ENCODE measurements at regions of chr10 and their contacts with region 1.

Region 1: GRCh38 chr10:627032-627992 is 62.2 kb downstream of the DIP2C start:
- DNase-seq: no peak
- H3K4me3 ChIP-seq: no peak overlapping the region
- H3K27ac ChIP-seq: no peak overlapping the region
- H3K4me1 ChIP-seq: peaks cover 42% of the 10 kb centered on the region
- H3K27me3 ChIP-seq: no peaks in the 10 kb centered on the region
- CTCF ChIP-seq: no peak
- POLR2A ChIP-seq: no peak

Region 2: DNA sequence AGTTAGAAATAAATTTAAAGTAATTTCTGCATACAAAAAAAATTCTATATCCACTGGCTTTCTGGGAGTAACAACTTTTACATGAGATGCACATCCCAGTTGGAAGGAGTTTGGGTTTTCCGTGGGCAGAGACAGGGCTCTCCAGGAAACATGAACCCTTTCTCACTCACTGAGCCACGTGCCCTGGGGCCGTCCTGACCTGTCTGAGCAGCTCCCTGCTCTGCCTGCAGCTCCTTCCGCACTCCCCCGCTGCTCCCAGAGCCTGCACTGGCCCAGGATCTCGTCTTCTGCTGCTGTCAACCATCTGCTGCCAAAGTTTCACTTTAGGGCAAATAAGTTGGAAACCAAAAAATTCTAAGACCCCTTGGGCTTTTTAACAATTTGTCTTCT is 106.9 kb before region 1 on chr10:
- intact Hi-C with region 1: no loop called
- DNase-seq: no peak
- H3K4me3 ChIP-seq: no peak overlapping the region
- H3K27ac ChIP-seq: no peak overlapping the region
- H3K4me1 ChIP-seq: peaks cover 29% of the 10 kb centered on the region
- H3K27me3 ChIP-seq: no peaks in the 10 kb centered on the region
- CTCF ChIP-seq: no peak
- POLR2A ChIP-seq: no peak

Region 3: DNA sequence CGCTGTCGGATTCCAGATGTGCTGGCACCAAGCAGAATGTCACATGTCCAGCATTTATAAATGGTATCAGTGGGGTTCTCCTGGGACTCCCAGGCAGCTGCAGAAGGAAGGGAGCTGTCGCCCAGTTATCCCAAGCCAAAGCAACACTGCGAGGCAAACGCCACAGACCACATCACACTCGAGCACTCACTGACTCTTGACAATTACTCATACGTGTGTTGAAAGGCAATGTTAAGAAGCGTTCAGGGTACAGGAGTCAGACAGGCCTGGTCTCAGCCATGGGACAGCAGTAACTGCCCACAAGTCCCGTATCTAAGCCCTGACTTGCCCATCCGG is 51.2 kb before region 1 on chr10:
- intact Hi-C with region 1: no loop called
- DNase-seq: no peak
- H3K4me3 ChIP-seq: no peak overlapping the region
- H3K27ac ChIP-seq: no peak overlapping the region
- H3K4me1 ChIP-seq: peaks cover 35% of the 10 kb centered on the region
- H3K27me3 ChIP-seq: no peaks in the 10 kb centered on the region
- CTCF ChIP-seq: no peak
- POLR2A ChIP-seq: no peak

Region 4: DNA sequence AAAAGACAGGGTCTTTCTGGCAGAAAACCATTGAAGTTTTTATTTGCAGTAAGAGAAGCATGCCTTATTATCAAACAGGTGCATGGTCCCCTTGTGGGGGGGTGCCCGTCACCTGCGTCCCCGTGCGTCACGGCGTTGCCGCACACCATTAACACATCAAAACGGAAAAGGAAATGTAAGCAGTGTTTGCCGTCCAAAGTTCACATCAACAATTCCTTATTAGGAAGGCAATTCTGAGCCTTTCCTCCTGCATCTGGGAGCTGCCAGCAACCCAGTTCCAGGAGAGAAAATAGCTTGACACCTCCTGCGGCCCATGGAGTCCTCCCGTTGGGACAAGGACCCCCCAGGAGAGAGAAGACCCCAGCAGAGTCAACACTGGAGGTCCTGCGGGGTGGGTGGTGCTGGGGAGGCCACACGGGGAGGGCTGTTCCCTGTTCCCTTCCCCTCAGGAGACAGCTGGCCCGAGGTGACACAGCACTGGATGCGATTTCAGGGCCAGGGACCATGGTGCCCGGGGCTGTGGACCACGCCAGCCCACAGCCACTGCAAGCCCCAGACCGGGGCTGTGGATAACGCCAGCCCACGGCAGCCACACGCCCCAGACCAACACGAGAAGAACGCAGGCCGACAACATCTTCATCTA is 22.6 kb after region 1 on chr10:
- intact Hi-C with region 1: loop called (anchors 1 kb)
- DNase-seq: no peak
- H3K4me3 ChIP-seq: peak overlapping the region in 1 of 2 donors; percentile 30
- H3K27ac ChIP-seq: peak overlapping the region; percentile 20
- H3K4me1 ChIP-seq: peaks cover 36% of the 10 kb centered on the region
- H3K27me3 ChIP-seq: no peaks in the 10 kb centered on the region
- CTCF ChIP-seq: no peak
- POLR2A ChIP-seq: no peak

Region 5: GRCh38 chr10:665579-666091 is 38.3 kb after region 1 on chr10:
- intact Hi-C with region 1: no loop called
- DNase-seq: no peak
- H3K4me3 ChIP-seq: peak overlapping the region in 1 of 2 donors; percentile 27
- H3K27ac ChIP-seq: no peak overlapping the region
- H3K4me1 ChIP-seq: peaks cover 34% of the 10 kb centered on the region
- H3K27me3 ChIP-seq: no peaks in the 10 kb centered on the region
- CTCF ChIP-seq: no peak
- POLR2A ChIP-seq: no peak

Region 6: GRCh38 chr10:1516492-1517165 is 889.3 kb after region 1 on chr10:
- intact Hi-C with region 1: no loop called
- DNase-seq: peak in 1 of 2 donors; percentile 34
- H3K4me3 ChIP-seq: no peak overlapping the region
- H3K27ac ChIP-seq: no peak overlapping the region
- H3K4me1 ChIP-seq: no peaks in the 10 kb centered on the region
- H3K27me3 ChIP-seq: no peaks in the 10 kb centered on the region
- CTCF ChIP-seq: no peak
- POLR2A ChIP-seq: no peak

Measured in vagina (tissue), 2 donors.